IMR-90 (cell line): ENCODE measurements at regions of chr10 and their contacts with region 1.

Region 1: GRCh38 chr10:118973744-118974143 is 55.8 kb upstream of the NANOS1 start:
- DNase-seq: no peak
- ATAC-seq: no peak
- H3K4me3 ChIP-seq: no peak overlapping the region
- H3K27ac ChIP-seq: no peak overlapping the region
- H3K4me1 ChIP-seq: no peaks in the 10 kb centered on the region
- H3K27me3 ChIP-seq: peaks cover 39% of the 10 kb centered on the region
- CTCF ChIP-seq: no peak
- POLR2A ChIP-seq: no peak
- RAD21 ChIP-seq: no peak

Region 2: DNA sequence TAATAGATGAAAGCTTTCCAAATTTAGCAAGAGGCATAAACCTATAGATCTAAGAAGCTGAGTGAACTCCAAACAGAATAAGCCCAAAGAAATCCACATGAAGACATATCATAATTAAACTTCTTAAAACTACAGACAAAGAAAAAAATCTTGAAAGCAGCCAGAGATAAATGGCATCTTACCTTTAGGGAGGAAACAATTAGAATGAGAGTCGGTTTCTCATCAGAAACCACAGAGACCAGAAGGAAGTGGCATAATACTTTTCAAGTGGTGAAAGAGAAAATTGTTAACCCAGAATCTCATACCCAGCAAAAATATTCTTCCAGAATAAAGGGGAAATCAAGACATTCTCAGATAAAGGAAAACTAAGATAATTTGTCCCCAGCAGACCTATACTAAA is 43.1 kb before region 1 on chr10:
- CTCF ChIA-PET with region 1: no interaction called
- POLR2A ChIA-PET with region 1: no interaction called
- dilution Hi-C with region 1: no loop called
- in situ Hi-C with region 1: no loop called
- intact Hi-C with region 1: loop called (anchors 1 kb)
- DNase-seq: no peak
- ATAC-seq: no peak
- H3K4me3 ChIP-seq: no peak overlapping the region
- H3K27ac ChIP-seq: no peak overlapping the region
- H3K4me1 ChIP-seq: no peaks in the 10 kb centered on the region
- H3K27me3 ChIP-seq: peaks cover 6% of the 10 kb centered on the region
- CTCF ChIP-seq: no peak
- POLR2A ChIP-seq: no peak
- RAD21 ChIP-seq: no peak